BJ (cell line): ENCODE measurements at regions of chr5 and their contacts with region 1.

Region 1: GRCh38 chr5:95781101-95781583 is 41.4 kb downstream of the GLRX start:
- DNase-seq: peak; percentile 35
- H3K4me3 ChIP-seq: no peak overlapping the region
- H3K27me3 ChIP-seq: no peaks in the 10 kb centered on the region
- CTCF ChIP-seq: peak; percentile 84

Region 2: DNA sequence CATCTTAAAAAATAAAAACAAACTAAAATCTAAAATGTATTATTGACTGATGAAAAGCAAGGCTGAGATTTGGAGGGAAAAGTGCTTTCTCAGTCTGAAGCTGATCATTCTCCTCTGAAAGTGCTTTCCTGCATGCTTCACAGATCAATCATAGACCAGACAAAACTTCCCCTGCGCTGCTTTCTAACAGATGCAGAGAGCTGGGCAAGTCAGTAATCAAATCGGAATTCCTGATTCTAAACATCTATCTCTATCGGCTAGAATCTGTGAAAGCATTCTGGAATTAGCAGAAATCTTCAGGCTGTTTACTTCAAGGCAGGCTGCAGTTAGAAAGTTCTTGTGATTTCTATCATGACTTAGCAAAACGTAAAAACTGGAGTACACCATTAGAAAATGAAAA is 405.6 kb before region 1 on chr5:
- CTCF ChIA-PET with region 1: no interaction called
- POLR2A ChIA-PET with region 1: no interaction called
- DNase-seq: no peak
- H3K4me3 ChIP-seq: no peak overlapping the region
- H3K27me3 ChIP-seq: no peaks in the 10 kb centered on the region
- CTCF ChIP-seq: no peak

Region 3: DNA sequence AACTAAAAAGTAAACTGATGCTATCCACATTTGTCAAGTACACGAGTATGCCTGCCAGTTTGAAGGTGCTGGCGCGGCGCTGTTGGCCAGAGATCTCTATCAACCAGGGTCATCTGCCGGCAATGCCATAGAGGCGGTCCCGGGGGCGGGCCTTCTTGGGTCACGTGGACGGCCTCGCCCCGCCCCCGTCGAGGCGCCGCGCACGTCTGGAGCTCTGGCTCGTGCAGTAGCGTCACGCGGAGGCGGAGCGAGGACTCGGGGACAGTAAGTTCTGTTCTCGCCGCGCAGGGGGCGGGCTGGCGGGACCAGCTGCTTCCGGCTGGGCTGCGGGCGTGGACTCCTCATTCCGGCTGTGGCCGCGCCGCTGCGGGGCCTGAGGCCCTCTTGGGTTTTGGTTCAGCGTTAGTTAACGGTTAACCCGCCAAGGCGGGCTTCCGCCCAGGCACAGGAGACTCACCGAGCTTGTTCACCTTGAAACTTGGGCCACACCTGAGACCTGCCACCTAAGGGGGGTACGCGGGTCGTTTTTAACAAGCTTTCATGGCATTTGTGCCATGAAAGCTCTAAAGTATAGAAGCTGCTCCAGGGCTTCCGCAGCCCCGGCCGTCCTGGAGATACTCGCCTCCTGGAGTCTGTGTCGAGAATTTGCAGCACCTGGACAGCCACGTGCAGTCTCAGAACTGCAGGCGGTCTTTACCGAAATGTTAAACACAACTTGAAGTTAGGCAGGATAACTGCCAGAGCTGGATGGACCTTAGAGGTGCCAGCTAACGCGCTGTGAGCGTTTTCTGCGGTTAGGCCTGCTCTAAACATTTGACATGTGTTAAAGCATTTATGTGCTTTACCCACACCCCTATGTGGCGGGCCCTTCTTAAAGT is 134.3 kb before region 1 on chr5 and contains the start of gene RFESD:
- CTCF ChIA-PET with region 1: interaction called, 41 read pairs
- POLR2A ChIA-PET with region 1: interaction called, 3 read pairs
- DNase-seq: peak; percentile 72
- H3K4me3 ChIP-seq: peak within 1 kb of the TSS; percentile 55
- H3K27me3 ChIP-seq: no peaks in the 10 kb centered on the region
- CTCF ChIP-seq: 0 out of 2 replicates have a peak, but pooled peaks have one; percentile 3
- polyA plus RNA-seq, gene RFESD: 1.1 and 1.9 TPM in 2 replicates

Region 4: DNA sequence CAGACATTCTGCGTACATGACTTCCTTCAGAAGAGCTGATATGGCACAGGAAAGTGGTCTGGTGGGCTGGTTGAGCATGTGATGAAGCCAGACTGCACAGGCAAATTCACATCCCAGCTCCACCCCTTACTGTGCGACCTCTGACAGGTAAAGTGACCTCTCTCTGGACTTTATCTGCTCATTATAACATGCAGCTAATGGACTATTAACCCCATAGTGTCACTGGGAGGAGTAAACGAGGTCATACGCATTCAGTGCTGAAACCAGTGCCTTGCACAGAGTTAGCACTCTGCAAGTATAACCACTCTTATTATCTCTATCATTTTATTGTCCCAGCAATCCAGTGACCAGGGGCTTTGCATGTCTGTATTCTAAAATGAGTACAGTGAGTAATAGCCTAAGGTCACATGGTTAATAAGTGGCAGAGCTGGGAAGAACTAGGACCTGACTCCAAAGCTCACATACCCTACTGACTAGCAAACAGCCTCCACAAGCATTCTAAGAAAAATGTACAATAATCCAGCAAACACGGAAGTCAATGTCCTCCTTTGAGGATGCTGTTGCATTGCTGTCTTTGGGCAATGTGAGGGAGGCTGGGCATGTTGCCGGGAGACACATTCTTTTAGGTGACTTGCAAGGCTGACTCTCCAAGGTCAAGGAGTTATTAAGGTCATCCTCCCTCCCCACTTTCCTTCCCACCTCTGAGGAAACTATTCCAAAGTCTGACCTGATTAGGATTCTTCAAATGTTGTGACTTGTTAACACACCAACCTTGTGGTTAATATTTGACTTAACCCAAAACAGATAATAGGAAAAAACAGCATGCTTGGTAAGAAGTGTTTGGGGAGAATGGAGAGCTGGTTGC is 22.4 kb after region 1 on chr5:
- CTCF ChIA-PET with region 1: interaction called, 22 read pairs
- POLR2A ChIA-PET with region 1: no interaction called
- DNase-seq: no peak
- H3K4me3 ChIP-seq: no peak overlapping the region
- H3K27me3 ChIP-seq: no peaks in the 10 kb centered on the region
- CTCF ChIP-seq: no peak

Region 5: DNA sequence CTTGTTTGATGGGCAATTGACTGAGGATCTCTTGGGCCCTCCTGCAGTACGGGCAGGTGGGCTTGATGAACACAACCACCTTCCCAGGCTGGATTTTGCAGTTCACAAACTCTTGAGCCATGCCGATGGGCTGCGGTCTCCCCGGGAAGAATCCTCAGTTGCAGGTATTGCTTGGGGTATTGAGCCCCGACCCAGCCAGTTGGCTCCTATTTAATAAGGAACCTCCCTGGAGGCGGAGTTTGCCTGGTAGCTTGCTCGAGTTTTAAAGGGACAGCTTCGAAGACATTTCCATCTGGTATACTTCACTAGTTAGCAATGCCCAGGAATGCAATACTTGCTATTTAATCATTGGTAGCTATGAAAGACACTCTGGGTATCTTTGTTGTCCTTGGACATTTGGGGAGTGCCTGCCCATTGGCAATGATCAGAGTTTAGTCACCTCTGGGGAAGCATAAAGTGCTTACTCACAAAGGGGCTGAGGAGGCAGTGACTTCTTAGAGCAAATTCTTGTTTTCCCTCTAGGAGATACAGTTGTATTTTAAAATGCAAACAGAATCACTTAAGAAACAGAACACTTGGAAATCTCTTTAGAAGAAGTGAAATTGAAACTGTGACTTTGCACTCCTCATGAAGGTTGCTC is 41.5 kb after region 1 on chr5 and contains the start of gene GLRX:
- CTCF ChIA-PET with region 1: interaction called, 14 read pairs
- POLR2A ChIA-PET with region 1: interaction called, 3 read pairs
- DNase-seq: peak; percentile 90
- H3K4me3 ChIP-seq: peak within 1 kb of the TSS; percentile 62
- H3K27me3 ChIP-seq: no peaks in the 10 kb centered on the region
- CTCF ChIP-seq: no peak
- polyA plus RNA-seq, gene GLRX: 295 and 431 TPM in 2 replicates

Region 6: DNA sequence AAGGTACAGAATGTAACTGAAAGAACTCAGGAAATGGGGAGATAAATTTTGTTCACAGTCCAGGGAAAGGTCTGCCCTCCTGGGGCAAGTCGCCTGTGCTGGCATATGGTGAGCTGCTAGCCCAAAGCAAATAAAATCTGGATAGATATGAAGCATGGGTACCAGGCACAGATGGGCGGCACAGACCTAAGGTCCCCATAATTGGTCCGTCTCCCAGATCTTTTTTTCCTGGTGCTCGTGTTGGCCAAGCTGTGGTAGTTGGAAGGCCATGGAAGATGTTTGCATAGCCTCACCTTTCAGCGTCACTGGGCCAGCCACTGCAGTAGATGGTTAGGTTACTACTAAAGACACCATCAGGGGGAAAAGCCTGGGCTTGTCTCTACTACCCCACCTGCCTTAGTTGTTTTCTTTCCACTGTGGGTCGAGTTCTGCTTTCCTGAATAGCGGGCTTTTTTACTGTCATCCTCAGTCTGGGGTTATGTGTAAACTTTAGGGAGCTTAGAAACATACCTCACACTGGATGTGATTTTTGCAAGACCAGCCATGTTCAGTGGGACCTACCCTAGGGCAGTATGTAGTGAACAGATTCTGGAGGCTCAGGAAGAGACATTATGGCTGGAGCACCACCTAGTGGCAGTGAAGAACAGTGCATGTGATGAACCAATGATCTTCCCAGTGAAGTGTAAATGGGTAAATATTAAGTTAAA is 65.6 kb after region 1 on chr5:
- CTCF ChIA-PET with region 1: interaction called, 176 read pairs
- POLR2A ChIA-PET with region 1: no interaction called
- DNase-seq: no peak
- H3K4me3 ChIP-seq: no peak overlapping the region
- H3K27me3 ChIP-seq: no peaks in the 10 kb centered on the region
- CTCF ChIP-seq: peak; percentile 88